ENCODE measurements at regions of chr3 and their contacts with region 1.

Region 1: GRCh38 chr3:59418836-59419235 is 369.0 kb upstream of the CFAP20DC start:
- DNase-seq: no peak
- H3K4me3 ChIP-seq: no peak overlapping the region
- H3K27ac ChIP-seq: no peak overlapping the region
- H3K4me1 ChIP-seq: no peaks in the 10 kb centered on the region
- H3K27me3 ChIP-seq: no peaks in the 10 kb centered on the region
- CTCF ChIP-seq: no peak

Region 2: GRCh38 chr3:59313365-59313764 is 105.5 kb before region 1 on chr3:
- CTCF ChIA-PET with region 1: no interaction called
- POLR2A ChIA-PET with region 1: no interaction called
- intact Hi-C with region 1: loop called (anchors 10 kb)
- DNase-seq: peak; percentile 40
- H3K4me3 ChIP-seq: no peak overlapping the region
- H3K27ac ChIP-seq: no peak overlapping the region
- H3K4me1 ChIP-seq: no peaks in the 10 kb centered on the region
- H3K27me3 ChIP-seq: no peaks in the 10 kb centered on the region
- CTCF ChIP-seq: peak; percentile 53

Region 3: GRCh38 chr3:59549962-59550361 is 131.1 kb after region 1 on chr3:
- CTCF ChIA-PET with region 1: no interaction called
- POLR2A ChIA-PET with region 1: no interaction called
- intact Hi-C with region 1: no loop called
- DNase-seq: no peak
- H3K4me3 ChIP-seq: no peak overlapping the region
- H3K27ac ChIP-seq: no peak overlapping the region
- H3K4me1 ChIP-seq: no peaks in the 10 kb centered on the region
- H3K27me3 ChIP-seq: no peaks in the 10 kb centered on the region
- CTCF ChIP-seq: no peak

Measured in A673 (cell line).